ENCODE measurements at regions of chr3 and their contacts with region 1.

Region 1: GRCh38 chr3:38136777-38137614 is at the start of gene ACAA1:
- DNase-seq: peak; percentile 96
- H3K4me3 Mint-ChIP-seq: peak within 1 kb of the TSS; percentile 94
- H3K27ac Mint-ChIP-seq: peak within 1 kb of the TSS; percentile 94
- H3K4me1 Mint-ChIP-seq: peaks cover 72% of the 10 kb centered on the region
- H3K27me3 Mint-ChIP-seq: no peaks in the 10 kb centered on the region
- total RNA-seq, gene ACAA1: 69.3 and 73.4 TPM in 2 replicates

Region 2: DNA sequence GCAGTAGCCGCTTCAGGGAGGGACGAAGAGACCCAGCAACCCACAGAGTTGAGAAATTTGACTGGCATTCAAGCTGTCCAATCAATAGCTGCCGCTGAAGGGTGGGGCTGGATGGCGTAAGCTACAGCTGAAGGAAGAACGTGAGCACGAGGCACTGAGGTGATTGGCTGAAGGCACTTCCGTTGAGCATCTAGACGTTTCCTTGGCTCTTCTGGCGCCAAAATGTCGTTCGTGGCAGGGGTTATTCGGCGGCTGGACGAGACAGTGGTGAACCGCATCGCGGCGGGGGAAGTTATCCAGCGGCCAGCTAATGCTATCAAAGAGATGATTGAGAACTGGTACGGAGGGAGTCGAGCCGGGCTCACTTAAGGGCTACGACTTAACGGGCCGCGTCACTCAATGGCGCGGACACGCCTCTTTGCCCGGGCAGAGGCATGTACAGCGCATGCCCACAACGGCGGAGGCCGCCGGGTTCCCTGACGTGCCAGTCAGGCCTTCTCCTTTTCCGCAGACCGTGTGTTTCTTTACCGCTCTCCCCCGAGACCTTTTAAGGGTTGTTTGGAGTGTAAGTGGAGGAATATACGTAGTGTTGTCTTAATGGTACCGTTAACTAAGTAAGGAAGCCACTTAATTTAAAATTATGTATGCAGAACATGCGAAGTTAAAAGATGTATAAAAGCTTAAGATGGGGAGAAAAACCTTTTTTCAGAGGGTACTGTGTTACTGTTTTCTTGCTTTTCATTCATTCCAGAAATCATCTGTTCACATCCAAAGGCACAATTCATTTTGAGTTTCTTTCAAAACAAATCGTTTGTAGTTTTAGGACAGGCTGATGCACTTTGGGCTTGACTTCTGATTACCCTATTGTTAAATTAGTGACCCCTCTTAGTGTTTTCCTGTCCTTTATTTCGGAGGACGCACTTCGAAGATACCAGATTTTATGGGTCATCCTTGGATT is 1143.4 kb before region 1 on chr3 and contains the start of gene MLH1:
- intact Hi-C with region 1: loop called (anchors 1 kb)
- DNase-seq: peak; percentile 99
- H3K4me3 Mint-ChIP-seq: no peak within 1 kb of the TSS
- H3K27ac Mint-ChIP-seq: no peak within 1 kb of the TSS
- H3K4me1 Mint-ChIP-seq: peaks cover 38% of the 10 kb centered on the region
- H3K27me3 Mint-ChIP-seq: no peaks in the 10 kb centered on the region
- total RNA-seq, gene MLH1: 63.4 and 65.0 TPM in 2 replicates

Region 3: GRCh38 chr3:37287776-37288175 is 849.2 kb before region 1 on chr3:
- intact Hi-C with region 1: no loop called
- DNase-seq: no peak
- H3K4me3 Mint-ChIP-seq: no peak overlapping the region
- H3K27ac Mint-ChIP-seq: peak overlapping the region; percentile 63
- H3K4me1 Mint-ChIP-seq: peaks cover 22% of the 10 kb centered on the region
- H3K27me3 Mint-ChIP-seq: no peaks in the 10 kb centered on the region

Region 4: GRCh38 chr3:37562876-37563275 is 574.1 kb before region 1 on chr3:
- intact Hi-C with region 1: no loop called
- DNase-seq: no peak
- H3K4me3 Mint-ChIP-seq: no peak overlapping the region
- H3K27ac Mint-ChIP-seq: no peak overlapping the region
- H3K4me1 Mint-ChIP-seq: no peaks in the 10 kb centered on the region
- H3K27me3 Mint-ChIP-seq: no peaks in the 10 kb centered on the region

Region 5: GRCh38 chr3:37945807-37946530 is 191.0 kb before region 1 on chr3:
- intact Hi-C with region 1: no loop called
- DNase-seq: no peak
- H3K4me3 Mint-ChIP-seq: no peak overlapping the region
- H3K27ac Mint-ChIP-seq: no peak overlapping the region
- H3K4me1 Mint-ChIP-seq: peaks cover 9% of the 10 kb centered on the region
- H3K27me3 Mint-ChIP-seq: no peaks in the 10 kb centered on the region

Region 6: GRCh38 chr3:38039101-38039898 is 97.7 kb before region 1 on chr3 and contains the start of gene DLEC1:
- intact Hi-C with region 1: loop called (anchors 1 kb)
- DNase-seq: peak; percentile 84
- H3K4me3 Mint-ChIP-seq: peak within 1 kb of the TSS; percentile 75
- H3K27ac Mint-ChIP-seq: peak within 1 kb of the TSS; percentile 93
- H3K4me1 Mint-ChIP-seq: peaks cover 36% of the 10 kb centered on the region
- H3K27me3 Mint-ChIP-seq: peaks cover 7% of the 10 kb centered on the region
- total RNA-seq, gene DLEC1: 0.10 and 0.12 TPM in 2 replicates

Region 7: DNA sequence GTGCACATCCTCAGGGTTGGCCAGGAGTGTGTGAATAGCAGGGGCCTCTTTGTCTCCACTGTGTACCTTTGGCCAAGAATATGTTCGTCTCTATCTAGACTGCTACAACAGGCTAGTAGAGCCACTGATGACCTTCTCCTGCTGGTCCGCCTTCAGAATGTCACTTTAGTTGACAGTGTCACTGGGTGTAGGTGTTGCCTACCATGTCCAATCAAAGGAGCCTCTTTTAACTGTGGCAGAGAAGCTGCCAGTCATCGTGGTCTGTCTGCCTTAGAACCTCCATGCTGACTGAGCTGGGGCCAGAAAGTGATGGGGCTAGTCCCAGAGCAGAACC is 68.4 kb after region 1 on chr3:
- intact Hi-C with region 1: loop called (anchors 1 kb)
- DNase-seq: peak; percentile 16
- H3K4me3 Mint-ChIP-seq: peak overlapping the region; percentile 38
- H3K27ac Mint-ChIP-seq: peak overlapping the region; percentile 80
- H3K4me1 Mint-ChIP-seq: peaks cover 73% of the 10 kb centered on the region
- H3K27me3 Mint-ChIP-seq: no peaks in the 10 kb centered on the region

Region 8: DNA sequence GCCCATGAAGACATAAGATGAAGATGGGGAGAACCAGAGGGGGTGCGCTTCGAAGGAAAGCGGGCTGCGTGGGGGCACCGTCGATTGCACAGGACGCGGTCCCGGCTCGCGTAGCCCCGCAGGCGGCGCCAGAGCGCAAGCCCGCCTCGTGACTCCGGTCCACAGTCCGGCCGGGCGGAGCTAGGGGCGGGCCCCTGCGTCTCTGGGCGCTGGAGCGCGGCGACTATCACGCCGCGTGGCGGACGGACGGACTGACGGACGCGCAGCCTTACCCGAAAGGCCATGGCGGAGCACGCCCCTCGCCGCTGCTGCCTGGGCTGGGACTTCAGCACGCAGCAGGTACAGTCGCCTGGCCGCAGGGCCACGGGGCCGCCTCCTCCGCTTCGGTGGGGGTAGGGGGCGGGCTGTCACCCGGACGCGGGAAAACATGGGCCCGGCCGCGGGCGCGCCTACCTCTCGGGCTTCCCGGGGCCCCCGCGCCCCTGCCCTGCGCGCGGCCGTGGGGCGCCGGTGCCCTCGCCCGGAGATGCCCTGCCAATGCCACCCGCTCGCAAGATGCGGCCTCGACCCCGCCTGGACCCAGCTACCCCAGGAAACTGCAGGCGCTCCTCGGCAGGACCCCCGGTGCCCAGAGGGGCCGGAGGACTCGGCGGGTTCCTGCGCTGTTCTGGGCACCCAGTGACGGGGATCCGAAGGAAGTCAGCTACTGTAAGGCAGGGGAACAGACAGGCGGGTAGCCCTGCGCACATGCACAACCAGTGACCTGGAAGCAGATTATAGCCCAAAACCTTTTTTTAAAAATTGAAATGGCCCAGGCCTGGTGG is 209.8 kb after region 1 on chr3 and contains the start of gene XYLB:
- intact Hi-C with region 1: loop called (anchors 1 kb)
- DNase-seq: peak; percentile 76
- H3K4me3 Mint-ChIP-seq: peak within 1 kb of the TSS; percentile 85
- H3K27ac Mint-ChIP-seq: no peak within 1 kb of the TSS
- H3K4me1 Mint-ChIP-seq: peaks cover 8% of the 10 kb centered on the region
- H3K27me3 Mint-ChIP-seq: peaks cover 8% of the 10 kb centered on the region
- total RNA-seq, gene XYLB: 7.1 and 9.9 TPM in 2 replicates

Region 9: DNA sequence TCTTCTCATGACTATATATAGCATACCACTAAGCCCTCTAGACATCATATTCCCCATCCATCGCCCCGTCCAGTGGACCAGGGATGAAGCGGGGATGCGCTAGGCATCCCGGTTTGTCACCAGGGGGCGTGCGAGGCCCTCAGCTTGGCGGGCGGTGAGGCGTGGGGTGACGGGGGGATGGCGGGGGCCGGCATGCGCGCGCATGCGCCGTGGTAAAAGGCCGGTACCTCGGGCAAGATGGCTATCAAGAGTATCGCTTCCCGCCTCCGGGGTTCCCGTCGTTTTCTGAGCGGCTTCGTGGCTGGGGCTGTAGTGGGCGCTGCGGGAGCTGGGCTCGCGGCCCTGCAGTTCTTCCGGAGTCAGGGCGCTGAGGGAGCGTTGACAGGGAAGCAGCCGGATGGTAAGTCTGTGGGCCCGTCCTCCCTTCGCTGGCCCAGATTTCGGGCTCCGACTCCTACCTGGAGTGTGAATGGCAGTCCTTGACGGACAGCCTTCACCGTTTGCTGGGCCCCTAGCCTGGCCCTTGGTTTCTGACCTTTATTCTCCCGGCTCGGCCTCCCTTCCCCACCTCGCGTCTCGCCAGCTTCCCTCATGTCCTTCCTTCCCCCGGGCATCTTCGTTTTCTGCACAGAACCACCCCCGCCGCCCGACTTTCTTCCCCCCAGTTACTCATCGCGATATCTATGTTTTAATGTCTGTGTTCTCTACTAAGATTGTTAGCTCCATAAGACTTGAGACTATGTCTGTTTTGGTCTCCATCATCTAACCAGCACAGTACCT is 359.3 kb after region 1 on chr3 and contains the start of gene EXOG:
- intact Hi-C with region 1: loop called (anchors 1 kb)
- DNase-seq: peak; percentile 87
- H3K4me3 Mint-ChIP-seq: peak within 1 kb of the TSS; percentile 95
- H3K27ac Mint-ChIP-seq: peak within 1 kb of the TSS; percentile 87
- H3K4me1 Mint-ChIP-seq: peaks cover 34% of the 10 kb centered on the region
- H3K27me3 Mint-ChIP-seq: no peaks in the 10 kb centered on the region
- total RNA-seq, gene EXOG: 20.0 and 21.6 TPM in 2 replicates

Region 10: GRCh38 chr3:39383045-39383880 is 1246.3 kb after region 1 on chr3 and contains the start of gene SLC25A38:
- intact Hi-C with region 1: loop called (anchors 5 kb)
- DNase-seq: peak; percentile 74
- H3K4me3 Mint-ChIP-seq: peak within 1 kb of the TSS; percentile 94
- H3K27ac Mint-ChIP-seq: peak within 1 kb of the TSS; percentile 97
- H3K4me1 Mint-ChIP-seq: peaks cover 34% of the 10 kb centered on the region
- H3K27me3 Mint-ChIP-seq: no peaks in the 10 kb centered on the region
- total RNA-seq, gene SLC25A38: 40.0 and 43.1 TPM in 2 replicates